ENCODE measurements at regions of chr4 and their contacts with region 1.

Region 1: DNA sequence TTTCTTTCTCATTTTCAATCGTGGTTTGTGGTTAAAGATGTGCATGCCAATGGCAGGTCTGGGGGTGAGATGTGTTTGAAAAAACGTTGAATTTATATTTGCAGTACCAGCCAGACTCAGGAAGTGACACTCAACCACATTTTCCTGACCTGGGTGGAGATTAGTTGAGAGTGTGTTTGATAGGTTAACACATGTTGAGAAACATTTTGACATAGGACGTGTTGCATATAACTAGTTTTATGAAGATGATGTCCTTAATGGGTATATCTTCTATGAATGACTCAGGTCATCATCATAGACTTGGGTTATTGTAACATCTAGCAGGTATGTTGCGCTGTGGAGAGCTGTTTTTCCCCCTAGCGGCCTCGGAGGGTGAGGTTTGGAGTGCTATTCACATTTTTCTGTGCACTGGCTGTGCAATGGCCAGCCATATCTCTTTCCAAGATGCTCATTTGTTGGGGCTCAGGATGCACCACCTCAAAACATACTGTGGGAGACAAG is 21.7 kb upstream of the CD38 start:
- DNase-seq: peak; percentile 68 to 91
- ATAC-seq: peak; percentile 85 to 95 (median 91)
- H3K4me3 ChIP-seq: peak overlapping the region; percentile 11
- H3K4me3 Mint-ChIP-seq: peak overlapping the region; percentile 90
- H3K27ac ChIP-seq: peak overlapping the region; percentile 40
- H3K27ac Mint-ChIP-seq: peak overlapping the region; percentile 79 to 88
- H3K4me1 ChIP-seq: peaks cover 36% of the 10 kb centered on the region
- H3K4me1 Mint-ChIP-seq: peaks cover 48 to 49% of the 10 kb centered on the region in 2 donors
- H3K27me3 ChIP-seq: no peaks in the 10 kb centered on the region
- H3K27me3 Mint-ChIP-seq: peaks cover 0 to 4% of the 10 kb centered on the region in 2 donors
- CTCF ChIP-seq: peak; percentile 65

Region 2: GRCh38 chr4:15636835-15637234 is 119.6 kb before region 1 on chr4:
- intact Hi-C with region 1: no loop called
- DNase-seq: no peak
- ATAC-seq: no peak
- H3K4me3 ChIP-seq: no peak overlapping the region
- H3K4me3 Mint-ChIP-seq: no peak overlapping the region
- H3K27ac ChIP-seq: no peak overlapping the region
- H3K27ac Mint-ChIP-seq: peak overlapping the region; percentile 18 to 59
- H3K4me1 ChIP-seq: no peaks in the 10 kb centered on the region
- H3K4me1 Mint-ChIP-seq: peaks cover 4 to 15% of the 10 kb centered on the region in 2 donors
- H3K27me3 ChIP-seq: no peaks in the 10 kb centered on the region
- H3K27me3 Mint-ChIP-seq: no peaks in the 10 kb centered on the region
- CTCF ChIP-seq: no peak

Region 3: DNA sequence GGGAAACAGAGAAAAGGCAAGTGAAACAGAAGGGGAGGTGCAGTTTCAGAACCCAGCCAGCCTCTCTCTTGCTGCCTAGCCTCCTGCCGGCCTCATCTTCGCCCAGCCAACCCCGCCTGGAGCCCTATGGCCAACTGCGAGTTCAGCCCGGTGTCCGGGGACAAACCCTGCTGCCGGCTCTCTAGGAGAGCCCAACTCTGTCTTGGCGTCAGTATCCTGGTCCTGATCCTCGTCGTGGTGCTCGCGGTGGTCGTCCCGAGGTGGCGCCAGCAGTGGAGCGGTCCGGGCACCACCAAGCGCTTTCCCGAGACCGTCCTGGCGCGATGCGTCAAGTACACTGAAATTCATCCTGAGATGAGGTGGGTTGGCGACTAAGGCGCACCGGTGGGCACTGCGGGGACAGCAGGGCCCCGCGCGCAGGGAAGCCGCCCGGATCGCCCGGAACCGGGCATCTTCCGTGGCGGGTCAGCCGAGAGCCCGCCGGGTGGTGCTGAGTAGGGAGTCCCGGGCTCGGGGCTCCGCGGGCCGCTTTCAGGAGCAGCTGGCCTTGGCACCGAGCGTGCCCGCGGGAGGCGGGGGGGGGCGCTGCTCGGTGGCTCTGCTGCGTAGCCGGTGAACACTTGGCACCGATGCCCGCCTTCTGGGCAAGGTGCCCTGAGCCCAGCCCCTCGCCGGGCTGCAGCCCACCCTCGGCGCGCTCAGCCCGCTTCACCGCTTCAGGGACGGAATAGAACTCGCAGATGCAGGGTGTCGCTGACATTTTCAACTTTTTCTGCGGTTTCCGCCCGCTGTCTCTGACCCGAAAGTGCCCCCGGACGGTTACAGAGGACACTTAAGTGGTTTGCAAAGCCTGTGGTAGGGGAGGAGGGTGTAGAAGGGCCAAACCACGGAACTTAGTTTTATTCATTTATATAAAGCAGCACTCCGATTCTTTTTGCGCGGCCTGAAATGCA is 22.2 kb after region 1 on chr4 and contains the start of gene CD38:
- intact Hi-C with region 1: loop called (anchors 1 kb)
- DNase-seq: peak; percentile 61 to 68
- ATAC-seq: peak; percentile 55 to 71 (median 70)
- H3K4me3 ChIP-seq: peak within 1 kb of the TSS; percentile 59
- H3K4me3 Mint-ChIP-seq: peak within 1 kb of the TSS; percentile 91
- H3K27ac ChIP-seq: peak within 1 kb of the TSS; percentile 49
- H3K27ac Mint-ChIP-seq: peak within 1 kb of the TSS; percentile 83 to 86
- H3K4me1 ChIP-seq: peaks cover 46% of the 10 kb centered on the region
- H3K4me1 Mint-ChIP-seq: peaks cover 71 to 78% of the 10 kb centered on the region in 2 donors
- H3K27me3 ChIP-seq: no peaks in the 10 kb centered on the region
- H3K27me3 Mint-ChIP-seq: no peaks in the 10 kb centered on the region
- CTCF ChIP-seq: no peak
- total RNA-seq, gene CD38: 91.8 to 124 (median 98.8) TPM

Measured in natural killer cell (primary cell).